OCI-LY7 (cell line): ENCODE measurements at regions of chr4 and their contacts with region 1.

Region 1: GRCh38 chr4:77819843-77820648 is 878 bp upstream of the CNOT6L start:
- DNase-seq: peak; percentile 95
- H3K4me3 ChIP-seq: peak overlapping the region; percentile 95
- H3K27ac ChIP-seq: peak overlapping the region; percentile 94
- H3K4me1 ChIP-seq: peaks cover 65% of the 10 kb centered on the region
- CTCF ChIP-seq: no peak; the same call in 1 of the 2 replicates

Region 2: GRCh38 chr4:77075869-77076799 is 743.9 kb before region 1 on chr4 and contains the start of gene CCNI:
- CTCF ChIA-PET with region 1: no interaction called
- POLR2A ChIA-PET with region 1: interaction called, 3 read pairs
- intact Hi-C with region 1: loop called (anchors 5 kb)
- DNase-seq: peak; percentile 99
- H3K4me3 ChIP-seq: peak within 1 kb of the TSS; percentile 95
- H3K27ac ChIP-seq: peak within 1 kb of the TSS; percentile 84
- H3K4me1 ChIP-seq: peaks cover 64% of the 10 kb centered on the region
- CTCF ChIP-seq: no peak
- total RNA-seq, gene CCNI: 105 and 116 TPM in 2 replicates

Region 3: DNA sequence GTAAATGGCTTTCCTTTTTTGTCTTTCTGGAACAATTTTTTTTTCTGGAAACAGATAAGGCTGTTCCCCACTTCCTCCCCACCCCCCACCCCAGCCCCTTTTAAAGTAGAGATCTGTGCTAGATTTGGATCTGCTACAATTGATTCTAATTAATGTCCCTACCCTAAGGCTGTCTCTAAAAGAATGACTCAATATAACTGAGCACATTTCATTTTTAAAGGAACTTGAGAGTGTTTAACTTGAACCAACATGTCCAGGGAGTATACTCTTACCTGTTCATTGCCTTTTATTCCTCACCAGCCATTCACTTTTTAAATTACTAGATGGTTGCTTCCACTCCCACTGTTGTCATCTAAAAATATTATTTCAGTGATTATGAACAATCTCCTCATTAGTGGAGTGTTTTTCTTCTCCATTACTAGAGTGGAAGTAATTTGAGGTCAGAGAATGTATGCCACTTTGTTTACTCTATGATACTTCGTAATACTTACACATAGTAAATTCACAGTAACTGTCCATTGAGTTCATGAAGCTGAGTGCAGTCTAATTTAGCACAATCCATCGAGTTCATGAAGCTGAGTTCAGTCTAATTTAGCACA is 13.2 kb after region 1 on chr4:
- CTCF ChIA-PET with region 1: no interaction called
- POLR2A ChIA-PET with region 1: interaction called, 40 read pairs
- intact Hi-C with region 1: loop called (anchors 1 kb)
- DNase-seq: no peak
- H3K4me3 ChIP-seq: no peak overlapping the region
- H3K27ac ChIP-seq: no peak overlapping the region
- H3K4me1 ChIP-seq: peaks cover 35% of the 10 kb centered on the region
- CTCF ChIP-seq: no peak

Region 4: GRCh38 chr4:77862478-77863216 is 42.6 kb after region 1 on chr4 and contains the start of gene MRPL1:
- CTCF ChIA-PET with region 1: interaction called, 12 read pairs
- POLR2A ChIA-PET with region 1: interaction called, 35 read pairs
- intact Hi-C with region 1: loop called (anchors 1 kb)
- DNase-seq: peak; percentile 96
- H3K4me3 ChIP-seq: peak within 1 kb of the TSS; percentile 73
- H3K27ac ChIP-seq: peak within 1 kb of the TSS; percentile 94
- H3K4me1 ChIP-seq: peaks cover 27% of the 10 kb centered on the region
- CTCF ChIP-seq: peak; percentile 62
- total RNA-seq, gene MRPL1: 16.6 and 22.6 TPM in 2 replicates

Region 5: DNA sequence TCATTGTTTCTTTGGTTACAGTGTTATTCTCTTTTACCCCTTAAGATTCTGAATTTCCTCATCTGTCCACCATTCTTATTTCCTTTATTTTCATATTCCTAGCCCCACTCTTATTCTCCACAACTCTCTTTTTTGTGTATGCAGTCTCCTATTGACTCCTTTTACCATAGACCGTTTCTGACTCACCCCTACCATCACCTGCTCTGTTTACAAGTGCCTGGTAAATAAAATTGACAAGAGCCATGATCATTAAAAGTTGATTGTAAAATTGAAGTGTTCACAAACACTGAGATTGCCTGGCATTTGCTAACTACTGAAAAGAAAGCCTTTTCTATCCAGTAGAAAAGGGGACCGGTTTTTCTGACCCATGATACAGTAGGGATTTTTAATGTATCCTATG is 97.0 kb after region 1 on chr4:
- CTCF ChIA-PET with region 1: no interaction called
- POLR2A ChIA-PET with region 1: interaction called, 3 read pairs
- intact Hi-C with region 1: loop called (anchors 2 kb)
- DNase-seq: no peak
- H3K4me3 ChIP-seq: peak overlapping the region; percentile 42
- H3K27ac ChIP-seq: peak overlapping the region; percentile 62
- H3K4me1 ChIP-seq: peaks cover 59% of the 10 kb centered on the region
- CTCF ChIP-seq: no peak